ENCODE measurements at regions of chr3 and their contacts with region 1.

Region 1: GRCh38 chr3:171320750-171321558 is 139.3 kb downstream of the TNIK start:
- DNase-seq: peak; percentile 70 to 83
- ATAC-seq: peak; percentile 93 to 94
- H3K4me3 ChIP-seq: no peak overlapping the region
- H3K27ac ChIP-seq: peak overlapping the region; percentile 77 to 91 (median 87)
- H3K4me1 ChIP-seq: peaks cover 69 to 71% of the 10 kb centered on the region in 2 donors
- H3K27me3 ChIP-seq: no peaks in the 10 kb centered on the region
- CTCF ChIP-seq: no peak
- POLR2A ChIP-seq: no peak

Region 2: GRCh38 chr3:171257251-171258203 is 63.4 kb before region 1 on chr3:
- in situ Hi-C with region 1: no loop called
- intact Hi-C with region 1: loop called (anchors 1 kb)
- DNase-seq: no peak
- ATAC-seq: peak; percentile 69 to 82
- H3K4me3 ChIP-seq: no peak overlapping the region
- H3K27ac ChIP-seq: peak overlapping the region; percentile 74 to 81 (median 80)
- H3K4me1 ChIP-seq: peaks cover 19 to 29% of the 10 kb centered on the region in 2 donors
- H3K27me3 ChIP-seq: no peaks in the 10 kb centered on the region
- CTCF ChIP-seq: no peak
- POLR2A ChIP-seq: no peak

Region 3: DNA sequence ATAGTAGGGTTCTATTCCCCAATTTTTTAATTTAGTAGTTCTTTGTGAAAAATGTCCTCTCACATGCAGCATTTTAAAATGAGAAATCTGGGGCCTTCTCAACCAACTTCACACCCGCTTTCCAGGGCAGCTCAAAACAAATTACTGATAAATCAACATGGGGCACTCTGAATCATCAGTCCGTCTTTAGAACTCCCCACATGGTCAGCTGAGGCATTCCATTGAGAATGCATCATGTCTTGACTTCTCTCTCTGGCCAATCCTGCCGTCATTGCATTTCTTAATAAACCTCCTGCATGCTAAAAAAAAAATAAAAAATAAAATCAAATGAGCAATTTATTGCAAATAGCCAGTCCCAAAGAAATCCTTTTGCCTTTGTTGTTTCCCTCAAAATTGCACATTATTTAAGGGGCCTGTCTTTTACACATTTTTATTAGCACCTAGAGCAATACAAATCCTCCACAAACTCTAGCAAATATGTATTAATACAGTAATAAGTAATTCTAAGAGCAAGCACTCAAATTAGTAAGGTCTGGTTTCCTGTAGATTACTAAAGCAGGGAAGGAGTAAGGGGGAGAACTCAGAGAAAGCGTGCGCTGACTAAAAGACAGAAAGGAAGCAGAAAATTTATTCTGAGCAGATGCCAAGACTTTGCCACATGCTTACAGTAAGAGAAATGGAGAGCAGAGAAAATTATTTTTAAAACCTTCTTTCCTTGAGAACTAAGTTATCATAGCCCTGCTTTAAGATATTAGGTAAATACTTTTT is 36.5 kb before region 1 on chr3:
- in situ Hi-C with region 1: no loop called
- intact Hi-C with region 1: loop called (anchors 2 kb)
- DNase-seq: peak; percentile 80 to 82
- ATAC-seq: peak; percentile 89 to 93
- H3K4me3 ChIP-seq: no peak overlapping the region
- H3K27ac ChIP-seq: peak overlapping the region; percentile 80 to 92 (median 82)
- H3K4me1 ChIP-seq: peaks cover 56 to 66% of the 10 kb centered on the region in 2 donors
- H3K27me3 ChIP-seq: no peaks in the 10 kb centered on the region
- CTCF ChIP-seq: no peak
- POLR2A ChIP-seq: peak in 1 of 2 donors; percentile 66